ENCODE measurements at regions of chr11 and their contacts with region 1.

Region 1: GRCh38 chr11:92048415-92048814 is 176.2 kb upstream of the FAT3 start:
- DNase-seq: no peak
- H3K4me3 ChIP-seq: no peak overlapping the region
- H3K27ac ChIP-seq: no peak overlapping the region
- H3K4me1 ChIP-seq: no peaks in the 10 kb centered on the region
- H3K27me3 ChIP-seq: no peaks in the 10 kb centered on the region
- CTCF ChIP-seq: no peak
- POLR2A ChIP-seq: no peak

Region 2: GRCh38 chr11:91955206-91955605 is 93.2 kb before region 1 on chr11:
- intact Hi-C with region 1: loop called (anchors 10 kb)
- DNase-seq: no peak
- H3K4me3 ChIP-seq: no peak overlapping the region
- H3K27ac ChIP-seq: no peak overlapping the region
- H3K4me1 ChIP-seq: no peaks in the 10 kb centered on the region
- H3K27me3 ChIP-seq: no peaks in the 10 kb centered on the region
- CTCF ChIP-seq: no peak
- POLR2A ChIP-seq: no peak

Region 3: DNA sequence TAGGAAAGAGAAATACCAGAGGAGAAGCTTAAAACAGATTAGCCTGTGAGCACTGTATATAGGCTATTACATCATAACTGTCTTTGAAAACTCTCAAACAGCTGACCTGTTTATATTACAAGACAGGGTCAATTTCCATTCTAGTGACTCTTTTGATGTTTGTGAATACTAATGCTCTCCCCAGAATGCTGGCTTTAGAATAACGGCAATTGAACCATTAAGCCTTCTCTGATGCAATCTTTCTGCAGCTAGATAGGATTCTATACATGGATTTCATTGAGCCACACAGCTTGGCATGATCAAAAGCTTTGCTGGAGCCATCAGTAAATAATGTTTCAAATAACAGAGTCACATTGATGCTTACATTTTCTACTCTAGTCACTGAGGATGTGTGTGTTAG is 53.5 kb after region 1 on chr11:
- intact Hi-C with region 1: no loop called
- DNase-seq: no peak
- H3K4me3 ChIP-seq: no peak overlapping the region
- H3K27ac ChIP-seq: no peak overlapping the region
- H3K4me1 ChIP-seq: no peaks in the 10 kb centered on the region
- H3K27me3 ChIP-seq: no peaks in the 10 kb centered on the region
- CTCF ChIP-seq: no peak
- POLR2A ChIP-seq: no peak

Region 4: DNA sequence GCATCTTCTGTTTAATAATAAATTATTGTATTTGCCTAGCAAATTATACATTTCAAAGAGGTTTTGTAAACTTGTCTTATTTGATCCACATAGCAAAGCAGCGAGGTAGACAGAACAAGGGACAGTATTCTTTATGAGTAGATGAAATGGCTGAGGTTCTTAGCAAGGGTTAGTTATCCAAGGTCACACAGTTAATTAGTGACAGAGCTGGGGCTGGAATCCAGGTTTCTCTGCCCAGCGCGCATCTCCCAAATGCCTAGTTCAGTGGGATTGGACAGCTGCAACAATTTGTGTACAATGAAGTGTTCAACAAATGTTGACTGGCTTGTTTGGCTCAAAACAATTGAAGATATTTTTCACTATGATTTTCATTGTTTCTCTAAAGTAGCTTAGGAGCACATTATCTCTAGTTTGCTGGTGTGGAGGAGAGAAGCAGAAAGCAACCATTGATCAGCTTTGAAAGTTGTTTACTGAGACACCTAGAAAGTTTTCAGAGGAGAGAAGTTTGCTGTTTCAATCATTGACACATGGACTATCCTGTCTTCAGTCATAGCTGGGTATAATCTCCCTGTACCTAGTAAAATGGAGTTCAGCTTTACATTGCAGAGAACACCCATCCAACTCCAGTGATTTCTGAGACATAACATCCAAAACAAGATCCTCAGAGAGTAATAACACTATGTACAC is 446.8 kb after region 1 on chr11:
- intact Hi-C with region 1: no loop called
- DNase-seq: no peak
- H3K4me3 ChIP-seq: no peak overlapping the region
- H3K27ac ChIP-seq: no peak overlapping the region
- H3K4me1 ChIP-seq: no peaks in the 10 kb centered on the region
- H3K27me3 ChIP-seq: no peaks in the 10 kb centered on the region
- CTCF ChIP-seq: no peak
- POLR2A ChIP-seq: no peak

Measured in uterus (tissue), 4 donors.